ENCODE measurements at regions of chr5 and their contacts with region 1.

Region 1: DNA sequence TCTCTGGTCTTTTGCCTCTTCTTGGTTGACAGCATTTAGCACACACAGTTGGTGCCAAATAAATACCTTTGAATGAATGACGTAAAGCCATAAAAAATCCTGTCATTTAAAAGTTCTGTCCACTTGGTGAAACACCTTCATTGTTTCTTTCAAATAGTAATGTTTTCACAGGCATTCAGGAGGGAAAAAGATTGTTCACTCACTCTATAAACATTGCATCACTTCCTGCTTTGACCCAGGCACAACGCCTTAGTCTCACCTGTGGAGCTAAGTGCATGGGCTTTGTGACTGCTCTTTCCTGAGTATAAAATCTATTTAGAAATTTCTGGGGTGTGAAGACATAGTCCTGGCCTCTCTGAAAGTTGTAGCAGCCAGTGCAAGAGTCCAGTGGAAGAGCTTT is 88.9 kb upstream of the CXCL14 start:
- DNase-seq: no peak
- H3K4me3 ChIP-seq: no peak overlapping the region
- H3K27ac ChIP-seq: no peak overlapping the region
- H3K4me1 ChIP-seq: no peaks in the 10 kb centered on the region
- H3K27me3 ChIP-seq: no peaks in the 10 kb centered on the region
- CTCF ChIP-seq: no peak
- POLR2A ChIP-seq: no peak

Region 2: GRCh38 chr5:134948911-134949310 is 718.8 kb before region 1 on chr5:
- intact Hi-C with region 1: no loop called
- DNase-seq: no peak
- H3K4me3 ChIP-seq: no peak overlapping the region
- H3K27ac ChIP-seq: no peak overlapping the region
- H3K4me1 ChIP-seq: no peaks in the 10 kb centered on the region
- H3K27me3 ChIP-seq: no peaks in the 10 kb centered on the region
- CTCF ChIP-seq: no peak
- POLR2A ChIP-seq: no peak

Region 3: GRCh38 chr5:135013947-135014570 is 653.6 kb before region 1 on chr5:
- intact Hi-C with region 1: loop called (anchors 5 kb)
- DNase-seq: peak; percentile 67 to 72
- H3K4me3 ChIP-seq: no peak overlapping the region
- H3K27ac ChIP-seq: peak overlapping the region; percentile 57
- H3K4me1 ChIP-seq: peaks cover 0 to 8% of the 10 kb centered on the region in 2 donors
- H3K27me3 ChIP-seq: no peaks in the 10 kb centered on the region
- CTCF ChIP-seq: no peak
- POLR2A ChIP-seq: no peak

Region 4: GRCh38 chr5:135700731-135701130 is 33.1 kb after region 1 on chr5:
- intact Hi-C with region 1: no loop called
- DNase-seq: no peak
- H3K4me3 ChIP-seq: no peak overlapping the region
- H3K27ac ChIP-seq: no peak overlapping the region
- H3K4me1 ChIP-seq: no peaks in the 10 kb centered on the region
- H3K27me3 ChIP-seq: no peaks in the 10 kb centered on the region
- CTCF ChIP-seq: no peak
- POLR2A ChIP-seq: no peak

Region 5: DNA sequence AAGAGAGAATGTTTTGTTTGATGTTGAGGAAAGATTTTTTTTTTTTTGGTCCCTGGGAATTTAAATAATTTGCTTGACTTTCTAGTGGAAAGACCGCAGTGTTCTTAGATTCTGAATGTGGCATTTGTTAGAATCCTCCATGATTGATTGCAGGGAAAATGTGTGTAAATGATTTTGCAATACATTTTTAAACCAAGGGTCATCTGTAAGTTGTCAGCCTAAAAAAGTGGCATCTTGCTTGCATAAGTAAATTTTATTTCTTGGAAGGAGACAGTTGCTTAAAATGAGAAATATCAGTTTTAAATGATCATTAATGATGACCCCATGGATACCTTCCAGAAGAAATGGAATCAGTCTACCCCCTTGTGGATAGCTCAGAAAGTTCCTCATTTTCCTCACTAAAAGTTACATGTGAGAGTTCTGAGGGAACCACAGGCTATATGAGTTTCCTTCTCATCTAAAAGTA is 61.7 kb after region 1 on chr5:
- intact Hi-C with region 1: loop called (anchors 2 kb)
- DNase-seq: no peak
- H3K4me3 ChIP-seq: no peak overlapping the region
- H3K27ac ChIP-seq: peak overlapping the region in 1 of 2 donors; percentile 68
- H3K4me1 ChIP-seq: no peaks in the 10 kb centered on the region
- H3K27me3 ChIP-seq: no peaks in the 10 kb centered on the region
- CTCF ChIP-seq: peak in 2 of 3 donors; percentile 31 to 37
- POLR2A ChIP-seq: no peak